Esophagus muscularis mucosa (tissue), 4 donors: ENCODE measurements at regions of chr6 and their contacts with region 1.

Region 1: GRCh38 chr6:24720604-24721460 is 1.9 kb upstream of the C6orf62 start:
- DNase-seq: peak; percentile 100
- H3K4me3 ChIP-seq: peak overlapping the region; percentile 75 to 97 (median 91)
- H3K27ac ChIP-seq: peak overlapping the region; percentile 98 to 99 (median 99)
- H3K4me1 ChIP-seq: peaks cover 10 to 40% (median 37%) of the 10 kb centered on the region in 4 donors
- H3K27me3 ChIP-seq: no peaks in the 10 kb centered on the region
- CTCF ChIP-seq: no peak
- EP300 ChIP-seq: no peak
- POLR2A ChIP-seq: peak; percentile 99

Region 2: GRCh38 chr6:24402697-24403501 is 317.9 kb before region 1 on chr6 and contains the start of gene MRS2:
- intact Hi-C with region 1: no loop called
- DNase-seq: peak; percentile 93
- H3K4me3 ChIP-seq: peak within 1 kb of the TSS; percentile 72 to 94 (median 84)
- H3K27ac ChIP-seq: peak within 1 kb of the TSS; percentile 76 to 84 (median 80)
- H3K4me1 ChIP-seq: peaks cover 17 to 26% (median 22%) of the 10 kb centered on the region in 4 donors
- H3K27me3 ChIP-seq: peaks cover 0 to 14% (median 3%) of the 10 kb centered on the region in 4 donors
- CTCF ChIP-seq: no peak
- EP300 ChIP-seq: no peak
- POLR2A ChIP-seq: peak; percentile 40
- total RNA-seq, gene MRS2: 24.5 to 30.7 (median 25.5) TPM

Region 3: GRCh38 chr6:24666641-24667377 is 54.0 kb before region 1 on chr6 and contains the starts of genes ACOT13 and TDP2:
- intact Hi-C with region 1: loop called (anchors 5 kb)
- DNase-seq: peak; percentile 97
- H3K4me3 ChIP-seq: peak within 1 kb of the TSS; percentile 78 to 92 (median 83)
- H3K27ac ChIP-seq: peak within 1 kb of the TSS; percentile 86 to 92 (median 88)
- H3K4me1 ChIP-seq: peaks cover 26 to 46% (median 36%) of the 10 kb centered on the region in 4 donors
- H3K27me3 ChIP-seq: no peaks in the 10 kb centered on the region
- CTCF ChIP-seq: peak; percentile 37 to 67 (median 51)
- EP300 ChIP-seq: no peak
- POLR2A ChIP-seq: peak; percentile 71
- total RNA-seq, gene ACOT13: 5.8 to 9.4 (median 7.2) TPM
- total RNA-seq, gene TDP2: 25.2 to 44.4 (median 37.6) TPM

Region 4: DNA sequence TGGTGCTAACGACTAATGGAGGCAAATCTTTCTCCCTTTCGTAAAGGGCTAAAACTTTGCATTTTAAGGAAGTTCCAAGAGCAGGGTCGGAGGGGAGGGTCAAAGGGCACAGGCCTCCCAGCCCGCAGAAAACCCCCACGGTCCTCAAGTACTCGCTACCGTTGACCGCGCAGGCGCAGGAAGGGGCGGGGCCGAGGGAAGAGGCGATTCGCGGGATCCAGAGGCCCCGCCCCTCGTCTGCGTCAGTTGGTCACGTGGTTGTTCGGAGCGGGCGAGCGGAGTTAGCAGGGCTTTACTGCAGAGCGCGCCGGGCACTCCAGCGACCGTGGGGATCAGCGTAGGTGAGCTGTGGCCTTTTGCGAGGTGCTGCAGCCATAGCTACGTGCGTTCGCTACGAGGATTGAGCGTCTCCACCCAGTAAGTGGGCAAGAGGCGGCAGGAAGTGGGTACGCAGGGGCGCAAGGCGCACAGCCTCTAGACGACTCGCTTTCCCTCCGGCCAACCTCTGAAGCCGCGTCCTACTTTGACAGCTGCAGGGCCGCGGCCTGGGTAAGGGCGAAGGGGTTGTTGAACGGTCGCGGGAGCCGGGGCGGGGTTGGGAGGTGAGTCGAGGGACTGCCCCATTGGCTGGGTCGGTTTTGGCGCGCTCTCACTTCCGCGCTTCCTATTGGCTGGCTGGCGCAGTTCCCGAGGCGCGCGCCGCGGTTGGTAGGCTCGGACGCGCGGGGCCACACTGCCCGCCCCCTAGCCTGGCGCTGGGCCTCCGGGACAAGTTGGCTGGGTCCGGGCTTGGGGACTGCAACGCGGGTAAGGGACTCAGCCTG is 54.1 kb after region 1 on chr6 and contains the start of gene GMNN:
- intact Hi-C with region 1: loop called (anchors 5 kb)
- DNase-seq: peak; percentile 99
- H3K4me3 ChIP-seq: peak within 1 kb of the TSS; percentile 78 to 97 (median 88)
- H3K27ac ChIP-seq: peak within 1 kb of the TSS; percentile 89 to 98 (median 94)
- H3K4me1 ChIP-seq: peaks cover 10 to 17% (median 16%) of the 10 kb centered on the region in 4 donors
- H3K27me3 ChIP-seq: no peaks in the 10 kb centered on the region
- CTCF ChIP-seq: no peak
- EP300 ChIP-seq: no peak
- POLR2A ChIP-seq: no peak
- total RNA-seq, gene GMNN: 4.1 to 8.0 (median 5.4) TPM